ENCODE measurements at regions of chr19 and their contacts with region 1.

Region 1: GRCh38 chr19:33080761-33081681 is at the start of gene GPATCH1:
- DNase-seq: peak; percentile 83
- ATAC-seq: peak; percentile 98
- H3K4me3 Mint-ChIP-seq: peak within 1 kb of the TSS; percentile 99
- H3K27ac Mint-ChIP-seq: peak within 1 kb of the TSS; percentile 93
- H3K4me1 Mint-ChIP-seq: peaks cover 23% of the 10 kb centered on the region
- H3K27me3 Mint-ChIP-seq: no peaks in the 10 kb centered on the region
- CTCF ChIP-seq: no peak
- total RNA-seq, gene GPATCH1: 12.8 and 13.0 TPM in 2 replicates

Region 2: DNA sequence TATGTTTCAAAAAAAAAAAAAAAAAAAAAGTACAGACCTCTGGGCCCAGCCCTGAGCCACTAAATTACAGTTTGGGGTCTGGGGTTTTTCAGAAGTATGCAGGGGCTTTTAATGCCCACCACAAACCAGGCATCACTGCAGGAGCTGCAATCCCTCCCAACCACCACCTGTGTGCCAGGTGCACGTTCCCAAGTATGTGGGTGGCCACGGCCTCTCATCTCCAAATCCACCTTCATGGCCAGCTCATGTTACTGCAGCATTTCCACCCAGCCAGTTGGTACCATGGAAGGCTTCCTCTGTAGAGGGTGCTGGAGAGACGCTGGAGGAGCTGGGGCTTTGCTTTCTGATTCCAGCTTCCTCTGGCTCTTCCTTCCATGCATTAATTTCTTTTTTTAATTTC is 135.7 kb before region 1 on chr19:
- CTCF ChIA-PET with region 1: no interaction called
- POLR2A ChIA-PET with region 1: no interaction called
- intact Hi-C with region 1: no loop called
- DNase-seq: no peak
- ATAC-seq: no peak
- H3K4me3 Mint-ChIP-seq: no peak overlapping the region
- H3K27ac Mint-ChIP-seq: no peak overlapping the region
- H3K4me1 Mint-ChIP-seq: no peaks in the 10 kb centered on the region
- H3K27me3 Mint-ChIP-seq: no peaks in the 10 kb centered on the region
- CTCF ChIP-seq: no peak

Region 3: DNA sequence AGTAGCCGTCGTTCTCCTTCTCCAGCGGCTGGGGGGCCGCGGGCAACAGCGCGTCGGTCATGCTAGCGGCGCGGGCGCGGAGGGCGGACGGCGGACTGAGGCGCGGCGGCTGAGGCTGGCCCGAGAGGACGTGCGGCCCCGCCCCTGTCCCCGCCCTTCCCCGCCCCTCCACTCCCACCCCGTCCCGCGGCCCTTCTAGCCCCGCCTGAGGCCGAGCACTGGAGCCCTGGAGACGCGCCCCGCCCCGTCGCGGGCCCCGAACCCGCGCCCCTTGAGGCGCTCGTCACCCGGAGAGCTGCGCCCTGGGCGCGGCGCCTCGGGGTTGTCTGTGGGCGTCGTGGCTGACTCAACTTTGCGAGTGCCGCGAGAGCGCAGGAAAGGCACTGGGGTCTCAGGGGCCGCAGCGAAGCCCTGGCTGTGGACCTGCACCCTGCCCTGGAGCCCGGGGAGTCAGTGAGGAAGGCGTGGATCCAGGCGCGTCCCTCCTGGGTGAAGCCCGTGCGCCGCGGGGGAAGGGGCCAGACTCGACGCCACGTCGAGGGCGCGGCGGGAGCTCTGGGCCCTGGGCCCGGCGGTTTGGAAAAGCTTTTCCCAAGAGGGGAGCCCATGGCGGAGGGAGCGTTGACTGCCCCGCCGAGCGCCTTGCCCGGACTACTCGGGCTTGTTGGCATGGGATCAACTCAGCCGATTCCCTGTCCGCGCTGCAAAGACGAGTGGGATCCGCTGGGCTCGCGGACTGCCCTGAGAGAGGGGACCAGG is 16.1 kb before region 1 on chr19 and contains the start of gene RHPN2:
- CTCF ChIA-PET with region 1: no interaction called
- POLR2A ChIA-PET with region 1: interaction called, 3 read pairs
- intact Hi-C with region 1: loop called (anchors 1 kb)
- DNase-seq: peak; percentile 53
- ATAC-seq: peak; percentile 89
- H3K4me3 Mint-ChIP-seq: peak within 1 kb of the TSS; percentile 76
- H3K27ac Mint-ChIP-seq: no peak within 1 kb of the TSS
- H3K4me1 Mint-ChIP-seq: peaks cover 9% of the 10 kb centered on the region
- H3K27me3 Mint-ChIP-seq: peaks cover 5% of the 10 kb centered on the region
- CTCF ChIP-seq: no peak
- total RNA-seq, gene RHPN2: 1.0 and 1.7 TPM in 2 replicates

Region 4: GRCh38 chr19:33110137-33110910 is 29.3 kb after region 1 on chr19:
- CTCF ChIA-PET with region 1: no interaction called
- POLR2A ChIA-PET with region 1: no interaction called
- intact Hi-C with region 1: no loop called
- DNase-seq: no peak
- ATAC-seq: no peak
- H3K4me3 Mint-ChIP-seq: no peak overlapping the region
- H3K27ac Mint-ChIP-seq: no peak overlapping the region
- H3K4me1 Mint-ChIP-seq: no peaks in the 10 kb centered on the region
- H3K27me3 Mint-ChIP-seq: no peaks in the 10 kb centered on the region
- CTCF ChIP-seq: no peak

Measured in activated B cell treated with CpG ODN at 0.5 μM for 24 hours (primary cell).